ENCODE measurements at regions of chr11 and their contacts with region 1.

Region 1: GRCh38 chr11:60887556-60887955 is 18.8 kb downstream of the PRPF19 start:
- DNase-seq: peak; percentile 58
- H3K4me3 Mint-ChIP-seq: no peak overlapping the region
- H3K27ac Mint-ChIP-seq: no peak overlapping the region
- H3K4me1 Mint-ChIP-seq: peaks cover 3% of the 10 kb centered on the region
- H3K27me3 Mint-ChIP-seq: no peaks in the 10 kb centered on the region

Region 2: GRCh38 chr11:60085909-60086308 is 801.6 kb before region 1 on chr11:
- CTCF ChIA-PET with region 1: no interaction called
- POLR2A ChIA-PET with region 1: no interaction called
- DNase-seq: no peak
- H3K4me3 Mint-ChIP-seq: no peak overlapping the region
- H3K27ac Mint-ChIP-seq: no peak overlapping the region
- H3K4me1 Mint-ChIP-seq: no peaks in the 10 kb centered on the region
- H3K27me3 Mint-ChIP-seq: peaks cover 13% of the 10 kb centered on the region

Region 3: GRCh38 chr11:60428517-60428916 is 459.0 kb before region 1 on chr11:
- CTCF ChIA-PET with region 1: no interaction called
- POLR2A ChIA-PET with region 1: no interaction called
- DNase-seq: no peak
- H3K4me3 Mint-ChIP-seq: no peak overlapping the region
- H3K27ac Mint-ChIP-seq: no peak overlapping the region
- H3K4me1 Mint-ChIP-seq: no peaks in the 10 kb centered on the region
- H3K27me3 Mint-ChIP-seq: peaks cover 20% of the 10 kb centered on the region

Region 4: DNA sequence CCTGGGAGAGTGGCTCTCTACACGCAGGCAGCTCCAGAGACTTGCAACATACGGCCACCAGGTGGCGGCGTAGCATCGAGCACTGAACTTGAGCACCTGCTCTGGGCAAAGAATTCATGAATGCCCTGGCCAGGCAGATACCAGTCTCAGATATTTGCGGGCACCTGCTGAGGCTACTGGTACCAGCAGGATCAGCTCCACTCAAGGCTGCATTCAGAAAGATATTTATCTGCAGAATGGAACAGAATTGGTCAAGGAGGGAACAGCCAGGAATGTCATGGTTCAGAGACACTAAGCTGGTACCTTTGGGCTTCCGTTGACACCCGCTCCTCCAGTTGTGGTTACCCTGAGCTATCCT is 56.4 kb before region 1 on chr11:
- CTCF ChIA-PET with region 1: interaction called, 42 read pairs
- POLR2A ChIA-PET with region 1: no interaction called
- DNase-seq: peak; percentile 85
- H3K4me3 Mint-ChIP-seq: no peak overlapping the region
- H3K27ac Mint-ChIP-seq: no peak overlapping the region
- H3K4me1 Mint-ChIP-seq: peaks cover 17% of the 10 kb centered on the region
- H3K27me3 Mint-ChIP-seq: peaks cover 8% of the 10 kb centered on the region

Region 5: DNA sequence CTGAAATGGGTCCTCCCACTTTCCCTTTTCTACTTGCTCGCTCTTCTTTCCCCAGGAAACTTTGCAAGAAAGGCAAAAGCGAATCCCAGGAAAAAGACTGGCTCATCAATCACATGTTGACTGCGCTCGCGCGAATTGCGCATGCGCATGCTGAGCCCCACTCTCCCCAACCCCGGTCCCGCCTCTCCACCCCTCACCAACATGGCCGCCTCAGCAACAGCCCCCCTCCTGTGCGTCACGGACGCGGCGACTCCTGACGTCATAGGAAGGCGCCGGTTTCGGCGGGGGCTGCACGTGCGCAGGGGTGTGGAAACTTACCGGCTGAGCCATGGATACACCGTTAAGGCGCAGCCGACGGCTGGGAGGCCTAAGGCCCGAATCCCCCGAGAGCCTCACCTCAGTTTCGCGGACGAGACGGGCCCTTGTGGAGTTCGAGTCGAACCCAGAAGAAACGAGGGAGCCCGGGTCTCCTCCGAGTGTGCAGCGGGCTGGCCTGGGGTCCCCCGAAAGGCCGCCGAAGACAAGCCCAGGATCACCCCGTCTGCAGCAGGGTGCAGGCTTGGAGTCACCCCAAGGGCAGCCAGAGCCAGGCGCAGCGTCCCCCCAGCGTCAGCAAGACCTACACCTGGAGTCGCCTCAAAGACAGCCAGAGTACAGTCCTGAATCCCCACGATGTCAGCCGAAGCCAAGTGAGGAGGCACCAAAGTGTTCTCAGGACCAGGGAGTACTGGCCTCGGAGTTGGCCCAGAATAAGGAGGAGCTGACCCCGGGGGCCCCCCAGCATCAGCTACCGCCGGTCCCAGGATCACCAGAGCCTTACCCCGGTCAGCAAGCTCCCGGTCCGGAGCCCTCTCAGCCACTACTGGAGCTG is 45.5 kb before region 1 on chr11 and contains the start of gene CCDC86:
- CTCF ChIA-PET with region 1: interaction called, 18 read pairs
- POLR2A ChIA-PET with region 1: interaction called, 3 read pairs
- DNase-seq: peak; percentile 97
- H3K4me3 Mint-ChIP-seq: peak within 1 kb of the TSS; percentile 84
- H3K27ac Mint-ChIP-seq: peak within 1 kb of the TSS; percentile 97
- H3K4me1 Mint-ChIP-seq: peaks cover 45% of the 10 kb centered on the region
- H3K27me3 Mint-ChIP-seq: no peaks in the 10 kb centered on the region
- total RNA-seq, gene CCDC86: 19.2 to 23.2 TPM

Region 6: GRCh38 chr11:60899046-60899936 is 11.7 kb after region 1 on chr11:
- CTCF ChIA-PET with region 1: interaction called, 20 read pairs
- POLR2A ChIA-PET with region 1: no interaction called
- DNase-seq: peak; percentile 26
- H3K4me3 Mint-ChIP-seq: no peak overlapping the region
- H3K27ac Mint-ChIP-seq: no peak overlapping the region
- H3K4me1 Mint-ChIP-seq: peaks cover 8% of the 10 kb centered on the region
- H3K27me3 Mint-ChIP-seq: no peaks in the 10 kb centered on the region

Region 7: DNA sequence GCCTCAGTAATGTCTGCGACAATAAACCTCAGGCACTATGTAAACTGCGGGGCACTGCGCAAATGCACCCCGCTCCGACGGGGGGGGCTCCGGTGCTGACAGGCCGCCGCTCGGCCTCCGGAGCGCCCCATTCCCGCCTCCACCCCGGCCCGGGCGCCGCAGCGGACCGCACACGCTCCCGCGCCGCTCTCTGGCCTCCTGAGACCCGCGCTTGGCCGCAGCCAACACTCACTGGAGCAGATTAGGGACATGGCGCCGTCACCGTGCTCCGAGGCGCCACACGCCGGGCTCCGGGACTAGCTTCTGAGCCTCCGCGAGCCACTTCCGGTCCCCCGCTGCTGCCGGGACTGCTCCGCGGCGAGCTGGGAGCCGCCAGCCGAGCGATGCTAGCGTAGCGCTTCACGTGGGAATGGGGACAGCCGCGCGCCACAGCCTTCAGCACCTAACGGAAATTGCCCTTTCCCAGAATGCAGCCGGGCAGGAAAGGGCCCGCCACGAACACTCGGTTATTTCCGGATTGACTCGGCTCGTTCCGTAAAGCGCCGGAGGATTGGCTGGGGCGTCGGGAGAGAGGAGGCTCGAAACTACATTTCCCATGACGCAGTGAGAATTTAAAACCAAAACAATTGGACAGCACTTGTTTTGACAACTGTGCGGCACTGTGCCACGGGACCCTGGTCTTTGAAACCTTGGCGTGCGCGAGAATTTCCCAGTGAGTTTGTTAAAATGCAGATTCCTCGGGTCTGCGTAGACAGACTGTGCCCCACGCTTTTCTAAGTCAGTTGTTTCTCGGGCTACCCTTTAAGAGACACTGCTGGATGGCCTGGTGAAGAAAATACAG is 18.8 kb after region 1 on chr11 and contains the start of gene PRPF19:
- CTCF ChIA-PET with region 1: interaction called, 12 read pairs
- POLR2A ChIA-PET with region 1: interaction called, 3 read pairs
- DNase-seq: peak; percentile 99
- H3K4me3 Mint-ChIP-seq: peak within 1 kb of the TSS; percentile 80
- H3K27ac Mint-ChIP-seq: peak within 1 kb of the TSS; percentile 96
- H3K4me1 Mint-ChIP-seq: peaks cover 40% of the 10 kb centered on the region
- H3K27me3 Mint-ChIP-seq: peaks cover 9% of the 10 kb centered on the region
- total RNA-seq, gene PRPF19: 125 to 128 TPM

Region 8: DNA sequence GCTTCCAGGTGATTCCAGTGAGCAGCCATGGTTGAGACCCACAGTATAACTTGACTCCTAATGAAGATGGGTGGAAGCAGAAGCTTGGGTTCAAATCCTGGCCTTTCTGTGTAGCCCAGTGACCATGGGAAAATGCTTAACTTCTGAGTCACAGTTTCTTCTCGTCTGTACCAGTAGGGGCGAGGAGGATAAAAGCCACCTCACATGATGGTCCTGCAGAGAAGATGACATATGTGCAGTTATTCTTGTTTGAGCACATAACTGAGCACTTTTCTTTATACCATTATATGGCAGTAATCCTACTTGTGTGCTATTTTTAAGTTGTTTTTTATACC is 31.4 kb after region 1 on chr11:
- CTCF ChIA-PET with region 1: no interaction called
- POLR2A ChIA-PET with region 1: no interaction called
- DNase-seq: no peak
- H3K4me3 Mint-ChIP-seq: no peak overlapping the region
- H3K27ac Mint-ChIP-seq: no peak overlapping the region
- H3K4me1 Mint-ChIP-seq: peaks cover 21% of the 10 kb centered on the region
- H3K27me3 Mint-ChIP-seq: peaks cover under 1% of the 10 kb centered on the region

Region 9: GRCh38 chr11:60944490-60945294 is 57.1 kb after region 1 on chr11:
- CTCF ChIA-PET with region 1: no interaction called
- POLR2A ChIA-PET with region 1: no interaction called
- DNase-seq: no peak
- H3K4me3 Mint-ChIP-seq: no peak overlapping the region
- H3K27ac Mint-ChIP-seq: peak overlapping the region; percentile 13
- H3K4me1 Mint-ChIP-seq: peaks cover 19% of the 10 kb centered on the region
- H3K27me3 Mint-ChIP-seq: peaks cover 5% of the 10 kb centered on the region